ENCODE measurements at regions of chr11 and their contacts with region 1.

Region 1: GRCh38 chr11:35006389-35007128 is 90.1 kb downstream of the PDHX start:
- DNase-seq: no peak
- ATAC-seq: no peak
- H3K4me3 ChIP-seq: no peak overlapping the region
- H3K27ac ChIP-seq: peak overlapping the region; percentile 83
- H3K4me1 ChIP-seq: peaks cover 73% of the 10 kb centered on the region
- H3K27me3 ChIP-seq: no peaks in the 10 kb centered on the region
- CTCF ChIP-seq: no peak

Region 2: GRCh38 chr11:35030716-35031213 is 24.2 kb after region 1 on chr11:
- CTCF ChIA-PET with region 1: interaction called, 6 read pairs
- POLR2A ChIA-PET with region 1: no interaction called
- intact Hi-C with region 1: loop called (anchors 2 kb)
- DNase-seq: peak; percentile 96
- ATAC-seq: peak; percentile 95
- H3K4me3 ChIP-seq: peak overlapping the region; percentile 40; the same call in 1 of the 2 replicates
- H3K27ac ChIP-seq: peak overlapping the region; percentile 99
- H3K4me1 ChIP-seq: peaks cover 49% of the 10 kb centered on the region
- H3K27me3 ChIP-seq: no peaks in the 10 kb centered on the region
- CTCF ChIP-seq: no peak

Region 3: DNA sequence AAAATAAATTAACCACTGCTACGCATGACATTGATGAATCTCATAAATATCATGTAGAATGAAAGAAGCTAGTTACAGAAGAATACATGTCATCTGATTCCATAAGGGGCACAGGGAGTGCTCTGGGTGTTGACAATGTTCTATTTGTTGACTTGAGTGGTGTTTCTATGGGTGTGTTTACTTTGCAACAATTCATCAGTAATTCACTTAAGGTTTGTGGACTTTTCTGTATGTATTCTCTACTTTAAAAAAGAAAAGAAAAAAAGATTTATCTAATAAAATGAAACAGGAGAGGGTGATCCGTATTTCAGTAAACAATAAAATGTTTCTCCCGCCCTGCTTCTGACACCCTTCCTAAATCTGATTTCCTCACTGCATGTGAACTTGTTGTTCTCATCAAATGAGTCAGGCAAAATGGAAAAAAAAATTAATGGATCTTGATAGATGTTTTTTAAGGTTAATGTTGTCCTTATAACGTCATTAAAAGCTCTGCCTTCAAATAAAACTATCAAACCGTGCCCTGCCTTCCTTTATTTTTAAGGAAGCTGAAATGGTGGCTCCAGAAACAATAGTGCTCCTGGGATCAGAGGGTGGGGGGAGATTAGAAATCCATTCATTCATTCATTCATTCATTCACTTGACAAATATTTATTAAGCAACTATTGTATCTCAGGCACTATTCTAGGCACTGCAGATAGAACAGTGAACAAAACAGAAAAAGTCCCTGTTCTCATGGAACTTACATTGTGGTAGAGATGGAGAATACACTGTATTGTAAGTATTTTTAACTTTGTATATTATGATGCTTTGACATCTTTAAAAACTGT is 55.3 kb after region 1 on chr11:
- CTCF ChIA-PET with region 1: no interaction called
- POLR2A ChIA-PET with region 1: no interaction called
- intact Hi-C with region 1: loop called (anchors 1 kb)
- DNase-seq: peak; percentile 55
- ATAC-seq: peak; percentile 90
- H3K4me3 ChIP-seq: no peak overlapping the region
- H3K27ac ChIP-seq: peak overlapping the region; percentile 74
- H3K4me1 ChIP-seq: peaks cover 14% of the 10 kb centered on the region
- H3K27me3 ChIP-seq: no peaks in the 10 kb centered on the region
- CTCF ChIP-seq: no peak

Region 4: DNA sequence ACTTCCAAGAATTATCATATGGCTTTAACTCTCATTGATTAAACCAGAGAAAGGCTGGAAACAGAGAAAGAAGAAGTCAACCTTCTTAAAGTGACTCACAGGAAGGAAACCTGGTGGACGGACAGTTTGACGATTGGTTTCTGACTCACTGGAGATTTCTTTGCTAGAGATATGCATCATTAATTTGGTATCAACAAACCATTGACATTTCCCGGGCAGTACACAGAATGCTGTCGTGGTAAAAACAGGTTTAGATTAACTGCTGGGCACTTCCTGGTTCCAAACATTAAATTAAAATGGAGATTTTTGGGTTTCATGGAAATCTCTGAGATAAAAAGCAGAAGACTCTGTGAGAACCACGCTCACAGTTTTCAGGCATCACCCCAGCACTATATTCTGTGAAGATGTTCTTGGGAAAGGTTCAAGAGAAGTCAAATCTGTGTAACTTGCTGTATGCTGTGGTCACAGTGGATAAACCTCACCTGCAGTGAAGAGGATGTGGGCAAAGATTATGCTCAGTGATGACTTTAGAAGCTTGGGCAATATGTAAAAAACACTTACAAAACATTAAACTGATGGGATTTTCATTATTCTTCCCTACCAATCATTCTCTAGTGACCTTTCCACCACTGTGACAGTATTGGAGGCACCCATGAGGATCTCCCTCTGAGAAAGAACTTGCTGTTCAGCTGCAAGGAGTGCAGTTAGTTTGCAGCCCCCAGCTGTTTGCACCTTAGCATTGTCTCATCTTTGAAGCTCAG is 71.3 kb after region 1 on chr11:
- CTCF ChIA-PET with region 1: no interaction called
- POLR2A ChIA-PET with region 1: no interaction called
- intact Hi-C with region 1: loop called (anchors 1 kb)
- DNase-seq: peak; percentile 92
- ATAC-seq: peak; percentile 74
- H3K4me3 ChIP-seq: peak overlapping the region; percentile 18; the same call in 1 of the 2 replicates
- H3K27ac ChIP-seq: peak overlapping the region; percentile 98
- H3K4me1 ChIP-seq: peaks cover 51% of the 10 kb centered on the region
- H3K27me3 ChIP-seq: no peaks in the 10 kb centered on the region
- CTCF ChIP-seq: no peak

Region 5: GRCh38 chr11:35126000-35126878 is 119.7 kb after region 1 on chr11:
- CTCF ChIA-PET with region 1: no interaction called
- POLR2A ChIA-PET with region 1: no interaction called
- intact Hi-C with region 1: no loop called
- DNase-seq: no peak
- ATAC-seq: no peak
- H3K4me3 ChIP-seq: no peak overlapping the region
- H3K27ac ChIP-seq: no peak overlapping the region
- H3K4me1 ChIP-seq: no peaks in the 10 kb centered on the region
- H3K27me3 ChIP-seq: no peaks in the 10 kb centered on the region
- CTCF ChIP-seq: no peak

Region 6: GRCh38 chr11:35165423-35166368 is 159.1 kb after region 1 on chr11:
- CTCF ChIA-PET with region 1: no interaction called
- POLR2A ChIA-PET with region 1: no interaction called
- intact Hi-C with region 1: loop called (anchors 5 kb)
- DNase-seq: peak; percentile 71
- ATAC-seq: peak; percentile 29
- H3K4me3 ChIP-seq: peak overlapping the region; percentile 42
- H3K27ac ChIP-seq: peak overlapping the region; percentile 97
- H3K4me1 ChIP-seq: peaks cover 64% of the 10 kb centered on the region
- H3K27me3 ChIP-seq: no peaks in the 10 kb centered on the region
- CTCF ChIP-seq: no peak

Region 7: GRCh38 chr11:35237860-35238715 is 231.5 kb after region 1 on chr11:
- CTCF ChIA-PET with region 1: no interaction called
- POLR2A ChIA-PET with region 1: no interaction called
- intact Hi-C with region 1: loop called (anchors 10 kb)
- DNase-seq: peak; percentile 59
- ATAC-seq: no peak
- H3K4me3 ChIP-seq: no peak overlapping the region
- H3K27ac ChIP-seq: no peak overlapping the region
- H3K4me1 ChIP-seq: peaks cover 25% of the 10 kb centered on the region
- H3K27me3 ChIP-seq: no peaks in the 10 kb centered on the region
- CTCF ChIP-seq: peak; percentile 95

Measured in PC-3 (cell line).